ENCODE measurements at regions of chr15 and their contacts with region 1.

Region 1: DNA sequence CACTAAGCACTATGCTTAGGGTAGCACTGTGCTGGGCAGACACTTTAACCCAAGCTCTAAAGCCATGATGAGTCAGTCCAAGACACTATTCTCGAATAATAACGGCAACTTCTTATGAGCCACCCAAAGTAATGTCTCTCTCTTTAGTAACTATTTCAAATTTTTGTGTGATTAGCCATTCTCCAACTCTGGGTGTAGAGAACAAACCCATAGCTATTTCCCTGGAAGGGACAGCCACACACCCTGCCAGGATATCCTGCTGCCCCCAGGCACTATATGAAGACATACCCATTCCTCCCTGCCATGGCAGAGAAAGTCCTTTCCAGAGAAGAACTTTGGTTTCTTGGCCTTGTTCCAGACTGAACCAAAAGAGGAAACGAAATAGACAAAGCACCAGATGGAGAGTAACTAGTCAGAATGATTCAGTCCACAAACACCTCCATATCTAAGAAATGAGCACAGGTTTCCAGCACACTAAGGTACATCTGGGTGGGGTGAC is 384.8 kb upstream of the THBS1 start:
- DNase-seq: peak; percentile 99
- H3K4me3 Mint-ChIP-seq: no peak overlapping the region
- H3K27ac Mint-ChIP-seq: peak overlapping the region; percentile 88
- H3K4me1 Mint-ChIP-seq: peaks cover 61% of the 10 kb centered on the region
- H3K27me3 Mint-ChIP-seq: no peaks in the 10 kb centered on the region
- CTCF ChIP-seq: no peak

Region 2: GRCh38 chr15:39180483-39180933 is 15.5 kb before region 1 on chr15:
- CTCF ChIA-PET with region 1: interaction called, 11 read pairs
- POLR2A ChIA-PET with region 1: interaction called, 37 read pairs
- intact Hi-C with region 1: no loop called
- DNase-seq: no peak
- H3K4me3 Mint-ChIP-seq: no peak overlapping the region
- H3K27ac Mint-ChIP-seq: peak overlapping the region; percentile 36
- H3K4me1 Mint-ChIP-seq: peaks cover 49% of the 10 kb centered on the region
- H3K27me3 Mint-ChIP-seq: no peaks in the 10 kb centered on the region
- CTCF ChIP-seq: no peak

Region 3: DNA sequence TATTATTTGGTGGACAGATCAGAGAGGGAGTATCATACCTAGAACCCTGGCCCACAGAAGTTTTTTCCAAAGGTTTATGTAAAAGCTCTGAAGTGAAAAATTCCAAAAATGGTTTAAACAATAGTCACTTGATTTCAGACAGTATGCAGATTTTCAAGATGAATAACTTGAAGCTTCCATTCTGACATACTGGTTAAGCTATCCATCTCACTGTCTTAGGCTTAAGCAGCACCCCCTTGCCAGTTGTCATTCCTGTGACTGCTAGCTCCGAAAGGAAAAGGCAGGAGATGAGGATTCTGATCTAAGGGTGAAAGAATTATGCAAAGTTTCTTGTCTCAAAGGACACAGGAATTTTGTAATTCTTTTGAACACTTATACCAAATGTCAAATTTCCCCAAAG is 47.4 kb after region 1 on chr15:
- CTCF ChIA-PET with region 1: no interaction called
- POLR2A ChIA-PET with region 1: no interaction called
- intact Hi-C with region 1: no loop called
- DNase-seq: no peak
- H3K4me3 Mint-ChIP-seq: no peak overlapping the region
- H3K27ac Mint-ChIP-seq: no peak overlapping the region
- H3K4me1 Mint-ChIP-seq: peaks cover 14% of the 10 kb centered on the region
- H3K27me3 Mint-ChIP-seq: no peaks in the 10 kb centered on the region
- CTCF ChIP-seq: no peak

Region 4: GRCh38 chr15:39404767-39405181 is 208.7 kb after region 1 on chr15:
- CTCF ChIA-PET with region 1: interaction called, 3 read pairs
- POLR2A ChIA-PET with region 1: interaction called, 3 read pairs
- intact Hi-C with region 1: loop called (anchors 1 kb)
- DNase-seq: peak; percentile 97
- H3K4me3 Mint-ChIP-seq: no peak overlapping the region
- H3K27ac Mint-ChIP-seq: no peak overlapping the region
- H3K4me1 Mint-ChIP-seq: peaks cover 22% of the 10 kb centered on the region
- H3K27me3 Mint-ChIP-seq: no peaks in the 10 kb centered on the region
- CTCF ChIP-seq: no peak